ENCODE measurements at regions of chr1 and their contacts with region 1.

Region 1: GRCh38 chr1:55337801-55338447 is 122.8 kb upstream of the USP24 start:
- DNase-seq: peak; percentile 23
- H3K4me3 ChIP-seq: no peak overlapping the region
- CTCF ChIP-seq: peak; percentile 43

Region 2: DNA sequence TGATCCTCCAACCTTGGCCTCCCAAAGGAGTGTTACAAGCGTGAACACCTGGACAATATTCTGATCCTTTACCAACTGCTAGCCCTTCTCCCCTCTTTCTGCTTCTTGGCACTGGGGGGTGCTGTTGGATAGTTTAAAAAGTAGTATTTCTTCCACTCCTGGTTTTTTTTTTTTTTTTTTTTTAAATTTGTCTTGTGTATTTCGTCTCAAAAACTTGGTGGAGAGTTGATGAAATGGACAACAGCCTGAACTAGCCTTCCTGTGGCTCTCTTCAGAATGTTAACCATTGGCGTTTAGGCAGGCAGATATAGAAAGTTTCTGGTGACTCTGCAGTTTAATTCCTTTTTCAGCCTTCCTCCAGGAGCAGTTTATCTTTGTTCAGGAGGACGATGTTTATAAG is 53.1 kb before region 1 on chr1:
- CTCF ChIA-PET with region 1: interaction called, 99 read pairs
- POLR2A ChIA-PET with region 1: no interaction called
- DNase-seq: no peak
- H3K4me3 ChIP-seq: no peak overlapping the region
- CTCF ChIP-seq: peak; percentile 53

Region 3: DNA sequence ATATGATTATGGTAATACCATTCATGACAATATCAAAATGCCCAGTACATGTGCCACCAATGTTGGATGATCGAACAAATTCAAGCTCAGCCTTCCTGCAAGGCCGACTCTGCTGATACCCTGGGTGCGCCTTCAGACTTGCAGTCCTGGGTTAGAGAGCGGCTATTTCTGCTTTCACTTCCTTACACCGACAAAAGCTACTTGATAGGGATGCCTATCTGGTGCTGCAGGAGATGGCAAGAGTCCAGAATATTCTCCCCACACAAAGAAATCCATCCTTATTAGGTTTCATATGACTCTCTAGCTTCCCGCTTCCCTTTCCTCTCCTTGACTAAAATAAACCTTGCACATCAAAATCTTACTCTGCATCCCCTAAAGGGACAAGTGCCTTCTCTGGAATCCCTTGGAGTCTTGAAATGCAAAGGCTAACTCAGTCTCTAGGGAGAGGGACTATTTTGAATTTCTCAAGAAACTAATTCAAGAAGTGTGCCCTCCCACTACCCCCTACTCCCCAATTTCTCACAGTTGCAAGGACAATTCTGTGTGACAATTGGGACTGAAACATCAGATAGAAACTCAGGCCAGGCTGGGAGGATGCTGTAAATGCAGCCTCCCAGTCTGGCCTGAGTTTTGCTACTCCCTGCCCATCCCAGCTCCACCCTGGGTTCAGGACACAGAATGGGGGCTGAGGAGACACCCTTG is 19.7 kb before region 1 on chr1:
- CTCF ChIA-PET with region 1: interaction called, 42 read pairs
- POLR2A ChIA-PET with region 1: interaction called, 4 read pairs
- DNase-seq: no peak
- H3K4me3 ChIP-seq: no peak overlapping the region
- CTCF ChIP-seq: no peak

Region 4: DNA sequence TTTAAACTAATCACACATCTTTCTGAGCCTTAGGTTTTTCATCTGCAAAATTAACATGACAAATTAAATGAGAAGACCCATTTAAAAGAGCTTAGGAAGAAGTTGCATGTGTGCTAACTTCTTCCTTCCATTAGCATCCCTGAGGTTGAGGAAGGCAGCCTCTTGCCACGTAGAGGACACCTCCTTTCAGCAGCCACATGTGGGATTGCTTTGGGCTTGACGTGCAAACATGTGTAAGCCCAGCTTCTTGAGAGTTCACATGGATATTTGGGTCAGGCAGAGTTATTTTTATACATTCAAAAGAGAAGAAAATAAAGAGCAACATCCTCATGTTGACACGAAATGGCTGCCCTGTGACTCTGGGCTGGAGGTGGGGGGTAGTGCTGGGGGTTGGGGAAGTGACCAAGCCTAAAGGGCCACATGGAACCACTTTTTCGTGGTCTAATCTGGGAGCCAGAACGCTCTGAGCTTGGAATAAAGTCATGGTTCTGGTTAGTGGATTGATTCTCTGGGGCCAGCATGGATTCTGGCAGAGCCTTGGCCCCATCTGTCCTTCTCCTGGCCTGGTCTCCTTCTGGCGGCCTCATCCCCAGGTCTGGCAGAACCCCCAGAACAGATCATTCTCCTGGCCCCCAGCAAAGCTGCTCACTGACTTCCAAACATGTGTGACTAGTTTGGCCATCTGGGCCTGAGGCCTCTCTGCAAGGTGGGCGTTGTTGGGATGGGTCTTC is 14.3 kb after region 1 on chr1:
- CTCF ChIA-PET with region 1: interaction called, 20 read pairs
- POLR2A ChIA-PET with region 1: no interaction called
- DNase-seq: no peak
- H3K4me3 ChIP-seq: no peak overlapping the region
- CTCF ChIP-seq: no peak

Region 5: GRCh38 chr1:55500601-55501000 is 162.7 kb after region 1 on chr1:
- CTCF ChIA-PET with region 1: no interaction called
- POLR2A ChIA-PET with region 1: no interaction called
- DNase-seq: no peak
- H3K4me3 ChIP-seq: no peak overlapping the region
- CTCF ChIP-seq: no peak

Region 6: GRCh38 chr1:56135069-56135863 is 797.3 kb after region 1 on chr1:
- CTCF ChIA-PET with region 1: no interaction called
- POLR2A ChIA-PET with region 1: no interaction called
- DNase-seq: no peak
- H3K4me3 ChIP-seq: no peak overlapping the region
- CTCF ChIP-seq: no peak

Region 7: GRCh38 chr1:56584910-56585528 is 1247.1 kb after region 1 on chr1:
- CTCF ChIA-PET with region 1: interaction called, 19 read pairs
- POLR2A ChIA-PET with region 1: no interaction called
- DNase-seq: peak; percentile 33
- H3K4me3 ChIP-seq: no peak overlapping the region
- CTCF ChIP-seq: peak; percentile 54

Measured in AG04449 (cell line).